Activated naive CD4-positive, alpha-beta T cell treated with anti-CD3 and anti-CD28 coated beads for 36 hours (primary cell): ENCODE measurements at regions of chr15 and their contacts with region 1.

Region 1: DNA sequence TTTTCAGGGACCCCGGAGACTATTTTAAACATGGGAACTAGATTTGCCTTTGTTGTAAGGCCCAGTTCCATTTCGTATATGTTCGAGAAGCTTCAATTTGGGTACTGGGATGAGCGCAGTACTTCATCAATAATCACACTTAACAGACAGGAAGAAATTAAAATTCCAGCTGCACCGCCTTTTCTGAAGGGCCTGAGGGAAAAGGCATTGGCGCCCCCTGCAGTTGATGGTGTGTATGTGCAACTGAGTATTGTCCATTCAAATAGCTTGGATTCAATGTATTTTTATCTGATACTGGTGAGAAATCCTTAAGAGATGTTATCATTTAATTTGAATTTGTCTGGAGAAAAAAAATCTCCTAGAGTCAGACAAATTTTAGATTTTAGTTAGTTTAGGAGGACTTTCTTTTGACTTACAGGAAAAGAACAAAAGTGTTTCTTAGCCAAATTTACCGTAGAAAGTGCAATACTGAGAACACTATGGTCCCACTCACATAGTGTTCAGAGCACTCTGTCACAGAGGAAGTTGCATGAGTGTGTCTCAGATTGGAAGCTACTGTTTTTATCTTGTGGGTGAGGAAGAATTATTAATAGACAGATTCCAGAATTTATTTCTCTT is 5.4 kb upstream of the ALDH1A2 start:
- DNase-seq: peak; percentile 77
- H3K4me3 Mint-ChIP-seq: no peak overlapping the region
- H3K27ac Mint-ChIP-seq: no peak overlapping the region
- H3K4me1 Mint-ChIP-seq: no peaks in the 10 kb centered on the region
- H3K27me3 Mint-ChIP-seq: peaks cover 27% of the 10 kb centered on the region

Region 2: DNA sequence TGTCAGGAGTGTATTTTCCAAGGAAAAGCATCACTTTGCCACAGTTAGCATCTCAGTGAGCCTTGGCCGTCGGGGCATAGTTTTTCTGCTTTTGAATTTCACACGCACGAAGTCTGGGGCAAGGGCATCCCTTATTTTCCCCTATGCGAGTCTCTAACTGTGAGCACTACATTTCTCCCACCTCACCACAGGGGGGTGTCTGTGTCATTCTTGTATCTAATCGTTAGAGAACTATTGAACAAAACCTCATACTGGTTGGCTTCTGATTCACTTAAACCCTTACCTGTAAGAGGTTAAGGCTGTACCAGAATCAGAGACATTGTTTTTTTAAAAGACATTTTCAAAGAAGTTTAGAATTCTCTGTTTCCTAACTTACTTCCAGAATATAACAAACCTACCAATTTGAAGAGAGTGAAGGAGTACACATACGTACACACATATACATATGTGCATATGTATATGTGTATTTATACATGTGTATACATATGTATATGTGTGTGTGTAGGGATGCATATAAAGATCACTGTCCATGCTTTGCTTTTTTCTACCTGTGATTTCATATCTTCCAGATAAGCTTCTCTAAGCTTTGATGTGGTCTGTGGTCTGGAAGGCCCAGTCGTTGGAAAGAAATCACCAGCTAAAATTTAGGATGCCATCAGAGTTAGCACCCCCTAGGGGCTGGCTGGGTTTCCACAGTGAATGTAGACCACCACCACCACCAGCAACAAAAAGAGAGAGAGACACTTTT is 429.8 kb before region 1 on chr15:
- CTCF ChIA-PET with region 1: interaction called, 4 read pairs
- intact Hi-C with region 1: loop called (anchors 10 kb)
- DNase-seq: peak; percentile 28
- H3K4me3 Mint-ChIP-seq: no peak overlapping the region
- H3K27ac Mint-ChIP-seq: no peak overlapping the region
- H3K4me1 Mint-ChIP-seq: peaks cover 7% of the 10 kb centered on the region
- H3K27me3 Mint-ChIP-seq: no peaks in the 10 kb centered on the region

Region 3: GRCh38 chr15:57751177-57751800 is 319.6 kb before region 1 on chr15:
- CTCF ChIA-PET with region 1: interaction called, 6 read pairs
- intact Hi-C with region 1: loop called (anchors 5 kb)
- DNase-seq: peak; percentile 15
- H3K4me3 Mint-ChIP-seq: no peak overlapping the region
- H3K27ac Mint-ChIP-seq: no peak overlapping the region
- H3K4me1 Mint-ChIP-seq: peaks cover 5% of the 10 kb centered on the region
- H3K27me3 Mint-ChIP-seq: no peaks in the 10 kb centered on the region

Region 4: GRCh38 chr15:58043192-58043903 is 27.6 kb before region 1 on chr15:
- CTCF ChIA-PET with region 1: interaction called, 7 read pairs
- intact Hi-C with region 1: loop called (anchors 2 kb)
- DNase-seq: peak; percentile 67
- H3K4me3 Mint-ChIP-seq: no peak overlapping the region
- H3K27ac Mint-ChIP-seq: no peak overlapping the region
- H3K4me1 Mint-ChIP-seq: no peaks in the 10 kb centered on the region
- H3K27me3 Mint-ChIP-seq: peaks cover 40% of the 10 kb centered on the region

Region 5: GRCh38 chr15:58182460-58183163 is 111.7 kb after region 1 on chr15:
- CTCF ChIA-PET with region 1: interaction called, 15 read pairs
- intact Hi-C with region 1: no loop called
- DNase-seq: peak; percentile 55
- H3K4me3 Mint-ChIP-seq: no peak overlapping the region
- H3K27ac Mint-ChIP-seq: no peak overlapping the region
- H3K4me1 Mint-ChIP-seq: peaks cover 11% of the 10 kb centered on the region
- H3K27me3 Mint-ChIP-seq: peaks cover 18% of the 10 kb centered on the region